Heart left ventricle (tissue), 16 donors: ENCODE measurements at regions of chr11 and their contacts with region 1.

Region 1: DNA sequence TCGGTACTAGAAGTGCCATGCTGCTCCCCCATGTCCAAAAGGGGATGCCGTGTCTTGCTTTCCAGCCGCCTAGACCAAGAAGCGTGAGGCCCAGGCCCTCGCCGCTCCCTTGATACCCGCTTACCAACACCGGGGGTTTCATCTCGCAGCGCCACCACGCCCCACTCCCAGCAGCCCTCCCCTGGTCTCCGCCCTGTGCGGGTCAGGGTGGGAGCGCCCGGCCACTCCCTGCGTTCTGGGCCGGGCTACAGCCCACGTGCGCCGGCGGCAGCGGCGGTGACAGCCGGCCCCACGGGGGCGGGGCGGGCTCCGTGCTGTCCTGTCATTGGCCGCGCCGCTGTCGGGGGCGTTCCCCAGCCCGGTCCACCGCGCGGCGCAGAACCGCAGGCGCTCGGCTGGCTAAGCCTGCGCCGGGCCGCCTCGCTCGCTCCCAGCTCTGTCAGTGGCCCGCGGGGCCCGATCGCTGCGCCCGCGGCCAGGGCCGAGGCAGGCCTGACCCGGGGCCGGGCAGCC is at the start of gene MICAL2:
- DNase-seq: peak; percentile 92 to 95 (median 93)
- ATAC-seq: peak; percentile 95 to 99 (median 96)
- H3K4me3 ChIP-seq: peak within 1 kb of the TSS; percentile 62 to 93 (median 86)
- H3K27ac ChIP-seq: peak within 1 kb of the TSS; percentile 46 to 91 (median 84)
- H3K4me1 ChIP-seq: peaks cover 0 to 62% (median 49%) of the 10 kb centered on the region in 12 donors
- H3K27me3 ChIP-seq: no peaks in the 10 kb centered on the region
- CTCF ChIP-seq: no peak
- POLR2A ChIP-seq: peak; percentile 46 to 76
- total RNA-seq, gene MICAL2: 48.2 to 110 (median 87.8) TPM

Region 2: DNA sequence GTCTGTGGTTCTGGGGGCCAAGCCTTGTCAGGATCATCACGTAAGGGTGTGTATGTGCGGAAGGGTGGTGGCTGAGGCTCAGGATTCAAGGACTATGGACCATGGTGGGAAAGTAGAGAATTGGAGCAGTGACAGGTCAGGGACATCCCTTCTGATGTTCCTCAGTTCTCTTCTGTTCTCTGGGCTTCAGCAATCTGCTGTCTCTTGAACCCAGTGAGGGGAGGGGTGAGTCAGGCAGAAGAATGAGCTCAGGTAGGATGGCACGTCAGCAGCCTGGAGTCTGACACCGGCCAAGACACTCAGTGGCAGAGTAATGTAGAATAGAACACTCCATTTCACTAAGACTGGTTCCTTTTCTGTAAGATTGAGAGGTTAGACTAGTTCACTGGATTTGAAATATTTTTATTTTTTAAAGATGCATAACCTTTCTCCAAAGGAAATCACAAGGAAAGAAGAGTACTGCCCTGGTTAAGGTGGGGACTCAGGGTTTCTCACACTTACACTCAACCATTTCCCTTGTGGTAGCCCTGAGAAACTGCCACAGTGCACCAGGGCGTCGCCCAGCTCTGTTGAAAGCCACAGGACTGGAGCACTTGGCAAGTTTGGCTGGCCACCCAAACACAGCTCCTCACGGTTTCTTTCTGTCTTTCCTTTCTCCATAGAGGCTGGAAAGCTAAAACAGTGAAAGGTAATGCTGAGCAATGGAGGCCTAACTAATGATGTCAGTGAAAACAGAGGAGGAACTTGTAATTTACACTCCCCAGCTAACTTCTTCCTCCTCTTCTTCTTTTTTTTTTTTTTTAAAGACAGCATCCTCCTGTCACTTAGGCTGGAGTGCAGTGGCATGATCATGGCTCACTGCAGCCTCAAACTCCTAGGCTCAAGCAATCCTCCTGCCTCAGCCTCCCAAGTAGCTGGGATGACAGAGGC is 22.9 kb before region 1 on chr11:
- intact Hi-C with region 1: loop called in 1 of 10 experiments (anchors 2 kb)
- DNase-seq: no peak
- ATAC-seq: peak in 2 of 4 donors; percentile 11 to 16
- H3K4me3 ChIP-seq: peak overlapping the region in 2 of 12 donors; percentile 13 to 20
- H3K27ac ChIP-seq: peak overlapping the region; percentile 73 to 96 (median 85)
- H3K4me1 ChIP-seq: peaks cover 12 to 75% (median 65%) of the 10 kb centered on the region in 12 donors
- H3K27me3 ChIP-seq: no peaks in the 10 kb centered on the region
- CTCF ChIP-seq: no peak
- POLR2A ChIP-seq: no peak

Region 3: DNA sequence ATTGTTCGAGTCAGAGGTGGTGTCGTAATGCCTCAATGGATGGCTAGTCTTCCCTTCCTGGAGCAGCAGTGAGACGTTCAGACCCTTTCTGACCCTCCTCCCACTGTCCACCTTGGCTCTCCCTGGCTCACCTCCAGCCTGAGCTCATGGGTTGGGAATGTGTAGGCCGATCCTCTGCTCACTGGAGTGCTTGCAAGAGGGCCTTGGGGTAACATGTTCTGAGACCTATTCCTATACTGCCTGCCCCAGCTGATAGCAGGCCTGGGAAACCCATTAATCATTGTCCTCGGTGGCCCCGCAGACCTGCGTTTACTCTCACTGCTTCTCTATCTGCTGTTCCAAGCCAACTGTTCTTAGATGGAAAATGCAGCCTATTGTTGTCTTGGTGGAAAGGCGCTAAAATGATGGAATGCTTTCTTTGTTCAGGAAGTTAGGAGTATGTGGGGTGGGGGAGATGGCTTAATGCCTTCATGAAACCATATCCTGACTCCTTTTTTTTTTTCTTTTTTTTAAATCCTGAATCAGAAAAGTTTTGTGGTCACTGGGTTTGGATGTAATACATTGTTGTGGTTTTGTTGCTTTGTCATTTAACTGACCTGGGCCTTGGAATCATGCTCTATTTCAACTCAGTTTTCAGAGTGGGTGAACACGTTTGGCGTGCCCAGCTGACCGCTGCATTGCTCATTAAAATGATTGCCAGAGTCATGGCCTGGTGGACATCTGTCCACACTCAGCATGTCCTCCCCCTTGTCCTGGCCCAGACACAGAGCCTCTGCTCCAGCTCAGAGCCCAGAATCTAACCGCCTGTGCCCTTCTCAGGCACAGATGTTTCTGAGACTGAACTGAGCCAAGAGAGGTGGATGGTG is 72.7 kb after region 1 on chr11:
- intact Hi-C with region 1: loop called in 1 of 10 experiments (anchors 5 kb)
- DNase-seq: peak in 4 of 5 donors; percentile 71 to 79 (median 72)
- ATAC-seq: peak; percentile 76 to 84 (median 82)
- H3K4me3 ChIP-seq: no peak overlapping the region
- H3K27ac ChIP-seq: peak overlapping the region; percentile 46 to 84 (median 74)
- H3K4me1 ChIP-seq: peaks cover 10 to 90% (median 64%) of the 10 kb centered on the region in 12 donors
- H3K27me3 ChIP-seq: no peaks in the 10 kb centered on the region
- CTCF ChIP-seq: no peak
- POLR2A ChIP-seq: no peak

Region 4: DNA sequence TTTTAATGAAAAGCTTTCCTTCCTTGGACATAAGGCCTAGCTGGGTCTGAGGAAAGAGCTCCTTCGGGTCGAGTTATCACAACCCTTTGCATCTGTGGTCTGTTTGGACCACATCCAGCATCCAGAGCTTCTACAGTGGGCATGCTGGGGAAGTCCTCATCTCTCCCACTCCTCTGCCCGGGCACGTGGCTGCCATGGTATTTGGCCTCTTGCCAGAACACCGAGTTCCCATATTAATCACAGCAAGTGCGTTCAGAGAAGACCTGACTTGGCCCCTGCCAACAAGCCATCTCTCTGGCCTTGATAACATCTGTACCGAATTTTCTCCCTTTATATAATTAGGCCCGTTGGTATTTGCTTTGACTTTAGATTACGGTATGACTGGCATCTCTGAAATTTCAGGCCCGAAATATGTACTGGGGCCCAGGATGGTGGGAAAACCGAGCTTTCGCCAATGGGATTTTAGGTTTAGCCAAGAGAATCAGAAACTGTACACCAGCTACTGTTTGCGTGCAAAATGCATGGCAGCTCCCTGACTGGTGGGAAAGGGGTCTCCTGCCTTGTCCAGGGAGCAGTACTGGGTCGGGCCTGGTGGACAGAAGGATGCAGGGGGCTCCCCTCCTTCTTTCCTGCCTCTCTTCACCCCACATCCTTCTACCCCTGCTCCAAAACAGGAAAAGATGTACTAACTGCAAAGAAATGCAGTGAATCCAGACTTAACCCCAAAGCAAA is 90.2 kb after region 1 on chr11:
- intact Hi-C with region 1: loop called in 1 of 10 experiments (anchors 2 kb)
- DNase-seq: peak in 4 of 5 donors; percentile 64 to 82 (median 70)
- ATAC-seq: peak; percentile 11 to 49 (median 34)
- H3K4me3 ChIP-seq: no peak overlapping the region
- H3K27ac ChIP-seq: peak overlapping the region; percentile 34 to 97 (median 85)
- H3K4me1 ChIP-seq: peaks cover 4 to 59% (median 43%) of the 10 kb centered on the region in 12 donors
- H3K27me3 ChIP-seq: no peaks in the 10 kb centered on the region
- CTCF ChIP-seq: no peak
- POLR2A ChIP-seq: no peak

Region 5: DNA sequence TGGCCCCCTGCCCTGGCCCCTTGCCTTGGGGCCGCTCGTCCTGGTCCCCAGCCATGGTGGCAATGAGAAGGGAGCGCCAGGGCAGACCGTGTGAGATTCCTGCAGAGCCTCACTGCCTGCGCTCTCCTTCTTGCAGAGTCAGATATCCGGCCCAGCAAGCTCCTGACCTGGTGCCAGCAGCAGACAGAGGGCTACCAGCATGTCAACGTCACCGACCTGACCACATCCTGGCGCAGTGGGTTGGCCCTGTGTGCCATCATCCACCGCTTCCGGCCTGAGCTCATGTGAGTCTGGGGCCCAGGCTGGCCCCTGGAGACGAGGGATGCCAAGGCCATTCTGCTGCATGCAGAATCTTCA is 114.3 kb after region 1 on chr11:
- intact Hi-C with region 1: loop called in 1 of 10 experiments (anchors 5 kb)
- DNase-seq: peak; percentile 80 to 90 (median 84)
- ATAC-seq: peak in 3 of 4 donors; percentile 44 to 65 (median 63)
- H3K4me3 ChIP-seq: peak overlapping the region in 1 of 12 donors; percentile 25
- H3K27ac ChIP-seq: peak overlapping the region in 10 of 12 donors; percentile 10 to 86 (median 46)
- H3K4me1 ChIP-seq: peaks cover 7 to 59% (median 38%) of the 10 kb centered on the region in 12 donors
- H3K27me3 ChIP-seq: no peaks in the 10 kb centered on the region
- CTCF ChIP-seq: no peak
- POLR2A ChIP-seq: no peak